Mucosa of descending colon (tissue), 3 donors: ENCODE measurements at regions of chr7 and their contacts with region 1.

Region 1: GRCh38 chr7:133904776-133905175 is 222.4 kb upstream of the LRGUK start:
- DNase-seq: no peak
- ATAC-seq: no peak
- H3K4me3 ChIP-seq: no peak overlapping the region
- H3K4me1 ChIP-seq: no peaks in the 10 kb centered on the region
- CTCF ChIP-seq: no peak

Region 2: DNA sequence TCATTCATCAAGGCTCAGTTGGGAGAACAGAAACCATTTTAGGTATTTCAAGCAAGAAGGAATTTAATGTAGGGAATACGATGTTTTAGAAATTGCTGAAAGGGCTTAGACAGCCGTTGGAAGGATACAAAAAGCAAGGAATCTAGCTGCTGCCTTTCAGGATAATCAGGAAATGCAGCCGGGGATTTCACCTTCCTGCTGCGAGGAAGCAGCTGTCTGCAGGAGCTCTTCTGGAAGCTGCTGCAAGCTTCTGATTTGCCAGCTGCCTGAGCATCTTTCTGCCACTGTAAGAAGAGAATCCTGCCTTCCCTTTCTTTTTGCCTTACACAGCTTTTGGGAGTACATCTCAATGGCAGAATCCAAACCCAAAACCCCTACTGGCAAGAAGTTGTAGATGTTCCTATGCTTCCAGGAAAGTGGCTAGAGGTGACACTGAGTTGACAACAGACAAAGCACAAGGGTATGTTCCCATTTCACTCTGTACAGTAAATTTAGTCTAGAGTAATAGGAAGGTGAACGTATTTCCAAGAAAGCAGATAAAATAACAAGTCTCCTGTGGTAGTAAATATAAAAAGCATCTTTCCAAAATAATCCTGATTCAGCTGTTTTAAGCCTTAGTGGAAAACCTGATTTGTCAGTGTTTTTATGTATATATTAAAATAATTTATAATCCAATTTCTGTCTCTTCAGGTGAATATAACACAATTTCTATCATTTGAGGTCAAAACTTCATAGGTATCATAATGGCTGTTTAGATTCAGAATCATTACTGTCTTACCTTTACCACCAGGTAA is 73.9 kb after region 1 on chr7:
- intact Hi-C with region 1: loop called in 1 of 2 experiments (anchors 10 kb)
- DNase-seq: no peak
- ATAC-seq: peak; percentile 32
- H3K4me3 ChIP-seq: no peak overlapping the region
- H3K4me1 ChIP-seq: no peaks in the 10 kb centered on the region
- CTCF ChIP-seq: no peak